GM13977 (cell line): ENCODE measurements at regions of chr5 and their contacts with region 1.

Region 1: DNA sequence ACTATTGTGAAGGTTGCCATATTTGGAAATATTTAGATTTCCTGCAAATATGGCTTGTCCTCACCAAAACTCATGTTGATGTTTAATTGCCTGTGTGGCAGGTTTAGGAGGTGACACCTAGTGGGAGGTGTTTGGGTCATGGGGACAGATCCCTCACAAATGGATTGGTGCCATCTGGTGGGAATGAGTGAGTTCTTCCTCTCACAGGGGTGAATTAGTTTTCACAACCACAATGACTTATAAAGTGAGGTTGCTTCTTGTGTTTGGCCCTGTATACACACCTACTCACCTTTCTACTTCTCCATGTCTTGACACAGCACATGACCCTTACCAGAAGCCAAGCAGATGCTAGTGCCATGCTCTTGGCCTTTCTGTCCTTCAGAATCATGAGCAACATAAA is 41.1 kb downstream of the ISOC1 start:
- DNase-seq: no peak
- CTCF ChIP-seq: peak; percentile 26

Region 2: DNA sequence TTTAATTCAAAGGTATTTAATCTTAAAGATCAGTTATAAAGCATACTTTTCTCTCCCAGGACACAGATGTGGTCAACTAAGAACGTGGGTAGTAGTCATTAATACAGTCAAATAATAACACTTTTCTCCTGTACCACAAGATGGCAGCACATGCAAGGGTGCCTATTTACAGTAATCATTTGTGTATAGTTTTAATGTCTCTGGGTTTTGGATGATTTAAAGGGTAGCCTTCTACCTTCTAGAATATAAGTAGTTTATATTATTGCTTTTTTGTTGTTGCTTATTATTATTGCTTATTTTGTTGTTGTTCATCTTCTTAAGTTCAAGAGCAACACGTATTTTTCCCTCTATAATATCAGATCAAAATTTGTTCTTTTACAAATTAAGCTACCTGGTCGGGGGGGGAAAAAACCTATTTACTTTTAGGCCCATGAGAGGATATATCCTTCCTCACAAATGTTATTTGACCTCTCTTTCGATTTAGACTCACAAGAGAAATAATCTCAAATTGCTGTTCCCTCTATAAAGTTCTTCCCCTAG is 230.0 kb before region 1 on chr5:
- in situ Hi-C with region 1: loop called (anchors 25 kb)
- DNase-seq: peak; percentile 29
- CTCF ChIP-seq: peak; percentile 78

Region 3: GRCh38 chr5:129079496-129079895 is 56.1 kb before region 1 on chr5:
- in situ Hi-C with region 1: no loop called
- DNase-seq: no peak
- CTCF ChIP-seq: no peak

Region 4: DNA sequence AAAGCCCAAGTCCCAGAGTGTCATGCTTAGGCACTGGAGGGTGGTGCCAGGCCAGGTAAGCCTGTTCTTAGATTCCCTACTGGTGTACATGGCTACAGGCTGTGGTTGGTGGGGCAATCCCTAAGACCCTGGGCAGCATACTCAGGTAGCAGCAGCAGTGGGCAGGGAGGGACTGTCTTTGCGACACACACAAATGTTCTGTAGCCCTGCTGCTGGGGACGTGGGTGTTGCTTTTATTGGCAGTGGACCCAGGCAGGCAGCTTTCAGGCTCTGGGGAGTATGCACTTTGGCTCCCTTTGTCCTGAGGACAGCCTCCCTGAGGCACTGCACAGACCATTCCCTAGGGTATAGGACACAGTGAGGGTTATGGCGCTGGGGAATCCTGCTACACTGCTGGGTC is 187.3 kb after region 1 on chr5:
- in situ Hi-C with region 1: no loop called
- DNase-seq: no peak
- CTCF ChIP-seq: no peak